AG04449 (cell line): ENCODE measurements at regions of chr11 and their contacts with region 1.

Region 1: GRCh38 chr11:12008790-12009616 is 577 bp upstream of the DKK3 start:
- DNase-seq: no peak
- H3K4me3 ChIP-seq: peak overlapping the region; percentile 94
- CTCF ChIP-seq: no peak

Region 2: GRCh38 chr11:11977206-11977938 is 31.6 kb before region 1 on chr11:
- CTCF ChIA-PET with region 1: interaction called, 19 read pairs
- POLR2A ChIA-PET with region 1: interaction called, 4 read pairs
- DNase-seq: peak; percentile 70
- H3K4me3 ChIP-seq: no peak overlapping the region; the same call in 1 of the 2 replicates
- CTCF ChIP-seq: no peak

Region 3: DNA sequence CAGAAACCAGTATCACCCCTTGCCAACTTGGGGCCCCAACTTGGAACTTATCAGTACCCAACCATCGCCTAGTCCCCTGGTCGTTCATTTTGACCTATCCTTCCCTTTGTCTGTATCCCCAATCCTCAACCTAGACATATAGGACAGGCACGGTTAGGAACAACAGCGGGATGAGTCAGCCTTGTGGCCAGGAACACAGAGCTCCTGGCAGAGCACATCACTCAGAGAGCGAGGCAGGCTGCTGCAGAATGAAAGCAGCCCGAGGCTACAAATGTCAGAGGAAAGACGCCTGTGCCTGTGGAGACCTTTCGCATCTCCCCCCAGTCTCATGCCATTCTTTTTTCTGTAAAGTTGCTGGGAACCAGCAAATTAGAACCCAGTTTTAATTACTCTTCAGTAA is 15.2 kb before region 1 on chr11:
- CTCF ChIA-PET with region 1: interaction called, 14 read pairs
- POLR2A ChIA-PET with region 1: interaction called, 3 read pairs
- DNase-seq: no peak
- H3K4me3 ChIP-seq: peak overlapping the region; percentile 8; the same call in 1 of the 2 replicates
- CTCF ChIP-seq: no peak

Region 4: GRCh38 chr11:12052676-12053605 is 43.9 kb after region 1 on chr11:
- CTCF ChIA-PET with region 1: no interaction called
- POLR2A ChIA-PET with region 1: no interaction called
- DNase-seq: no peak
- H3K4me3 ChIP-seq: no peak overlapping the region
- CTCF ChIP-seq: peak; percentile 31

Region 5: GRCh38 chr11:12294613-12295012 is 285.6 kb after region 1 on chr11:
- CTCF ChIA-PET with region 1: no interaction called
- POLR2A ChIA-PET with region 1: no interaction called
- DNase-seq: no peak
- H3K4me3 ChIP-seq: no peak overlapping the region
- CTCF ChIP-seq: no peak